CD4-positive, alpha-beta memory T cell (primary cell): ENCODE measurements at regions of chr13 and their contacts with region 1.

Region 1: GRCh38 chr13:49443704-49444523 is at the starts of genes CAB39L and SETDB2:
- DNase-seq: peak; percentile 99 to 100 (median 100)
- H3K4me3 ChIP-seq: peak within 1 kb of the TSS; percentile 72 to 88
- H3K4me3 Mint-ChIP-seq: peak within 1 kb of the TSS; percentile 92 to 98 (median 96)
- H3K27ac ChIP-seq: peak within 1 kb of the TSS; percentile 79
- H3K27ac Mint-ChIP-seq: peak within 1 kb of the TSS; percentile 93 to 99 (median 99)
- H3K4me1 ChIP-seq: peaks cover 50% of the 10 kb centered on the region
- H3K4me1 Mint-ChIP-seq: peaks cover 28 to 58% (median 41%) of the 10 kb centered on the region in 4 donors
- H3K27me3 ChIP-seq: no peaks in the 10 kb centered on the region
- H3K27me3 Mint-ChIP-seq: no peaks in the 10 kb centered on the region
- total RNA-seq, gene CAB39L: 5.7 to 7.7 TPM
- total RNA-seq, gene SETDB2: 27.6 to 28.2 TPM

Region 2: DNA sequence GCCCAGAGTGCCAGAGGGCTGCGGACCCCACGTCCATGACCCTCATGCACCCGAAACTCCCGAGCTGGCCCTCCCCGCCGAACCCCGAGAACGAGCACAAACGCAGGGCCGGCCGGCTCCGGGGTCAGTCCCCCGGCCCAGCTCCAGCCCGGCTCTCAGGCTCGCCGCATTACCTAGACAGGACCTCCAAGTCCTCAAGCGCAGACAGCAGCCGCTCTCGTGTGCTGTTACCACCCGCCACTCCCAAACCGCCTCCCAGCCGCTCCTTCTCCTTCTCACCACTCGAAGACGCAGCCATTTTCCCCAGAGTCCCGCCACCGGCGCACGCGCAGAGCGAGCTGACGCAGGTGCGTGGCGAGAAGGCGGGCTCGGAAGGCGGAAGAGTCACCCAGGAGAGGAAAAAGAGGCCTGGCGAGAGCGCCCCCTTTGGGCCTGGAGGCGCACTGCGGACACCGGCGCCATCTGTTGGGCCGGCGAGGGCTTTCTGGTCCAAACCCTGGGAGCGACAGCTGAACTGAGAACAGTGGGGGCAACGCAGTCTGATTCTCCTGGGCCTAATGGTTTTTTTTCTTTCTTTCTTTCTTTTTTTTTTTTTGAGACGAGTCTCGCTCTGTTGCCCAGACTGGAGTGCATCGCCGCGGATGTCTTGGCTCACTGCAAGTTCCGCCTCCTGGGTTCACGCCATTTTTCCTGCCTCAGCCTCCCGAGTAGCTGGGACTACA is 1349.0 kb before region 1 on chr13 and contains the start of gene MED4:
- CTCF ChIA-PET with region 1: no interaction called
- POLR2A ChIA-PET with region 1: no interaction called
- intact Hi-C with region 1: loop called (anchors 5 kb)
- DNase-seq: peak; percentile 95 to 98 (median 97)
- H3K4me3 ChIP-seq: peak within 1 kb of the TSS; percentile 73 to 76
- H3K4me3 Mint-ChIP-seq: peak within 1 kb of the TSS; percentile 93 to 98 (median 96)
- H3K27ac ChIP-seq: peak within 1 kb of the TSS; percentile 96
- H3K27ac Mint-ChIP-seq: peak within 1 kb of the TSS; percentile 92 to 99 (median 98)
- H3K4me1 ChIP-seq: peaks cover 37% of the 10 kb centered on the region
- H3K4me1 Mint-ChIP-seq: peaks cover 24 to 54% (median 35%) of the 10 kb centered on the region in 4 donors
- H3K27me3 ChIP-seq: no peaks in the 10 kb centered on the region
- H3K27me3 Mint-ChIP-seq: peaks cover 0 to 2% of the 10 kb centered on the region in 2 donors
- total RNA-seq, gene MED4: 50.6 to 53.5 TPM

Region 3: GRCh38 chr13:48709213-48709612 is 734.7 kb before region 1 on chr13:
- CTCF ChIA-PET with region 1: no interaction called
- POLR2A ChIA-PET with region 1: no interaction called
- intact Hi-C with region 1: no loop called
- DNase-seq: no peak
- H3K4me3 ChIP-seq: no peak overlapping the region
- H3K4me3 Mint-ChIP-seq: no peak overlapping the region
- H3K27ac ChIP-seq: no peak overlapping the region
- H3K27ac Mint-ChIP-seq: no peak overlapping the region
- H3K4me1 ChIP-seq: peaks cover 9% of the 10 kb centered on the region
- H3K4me1 Mint-ChIP-seq: peaks cover 8 to 11% (median 10%) of the 10 kb centered on the region in 4 donors
- H3K27me3 ChIP-seq: no peaks in the 10 kb centered on the region
- H3K27me3 Mint-ChIP-seq: no peaks in the 10 kb centered on the region

Region 4: DNA sequence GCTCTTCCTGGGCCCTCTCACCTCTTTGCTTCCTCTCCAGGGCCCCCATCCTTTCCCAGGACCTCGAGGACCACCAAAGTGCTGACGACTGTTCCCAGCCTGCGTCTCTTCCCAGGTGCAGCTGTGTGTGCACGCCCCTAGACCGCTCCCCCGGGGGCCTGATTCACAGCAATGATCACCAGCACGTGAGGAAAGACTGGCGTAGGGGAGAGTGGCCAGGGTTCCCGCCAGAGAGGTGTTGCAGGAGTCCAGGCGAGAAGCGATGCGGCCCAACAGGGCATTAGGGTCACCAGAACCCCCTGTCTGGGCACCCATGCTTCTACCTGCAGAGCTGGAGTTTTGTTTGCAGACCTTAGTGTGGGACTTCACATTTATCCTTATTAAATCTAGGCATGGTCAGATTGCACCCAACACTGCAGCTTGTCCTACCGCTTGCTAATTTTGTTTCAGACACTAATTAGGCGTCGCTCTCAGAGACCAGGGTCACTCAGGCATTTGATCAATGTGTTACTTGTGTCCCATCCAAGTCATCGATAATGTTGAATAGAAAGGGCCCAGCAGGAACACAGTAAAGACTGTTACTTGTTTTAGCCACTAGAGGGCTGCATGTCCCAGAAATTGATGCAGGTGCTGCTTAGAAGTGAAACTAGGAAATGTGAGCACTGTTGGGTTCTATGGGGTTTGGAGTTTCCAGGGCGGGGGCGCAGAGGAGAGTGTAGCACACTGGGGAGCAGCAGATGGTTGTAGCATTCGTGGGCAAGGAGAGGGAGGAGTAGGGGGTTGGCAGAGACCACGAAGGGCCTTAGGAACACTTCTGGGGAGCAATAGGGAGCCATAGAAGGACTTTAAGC is 142.9 kb before region 1 on chr13:
- CTCF ChIA-PET with region 1: interaction called, 5 read pairs
- POLR2A ChIA-PET with region 1: interaction called, 3 read pairs
- intact Hi-C with region 1: loop called (anchors 2 kb)
- DNase-seq: peak; percentile 77 to 79 (median 77)
- H3K4me3 ChIP-seq: peak overlapping the region; percentile 15 to 45
- H3K4me3 Mint-ChIP-seq: peak overlapping the region; percentile 70 to 85 (median 80)
- H3K27ac ChIP-seq: no peak overlapping the region
- H3K27ac Mint-ChIP-seq: peak overlapping the region in 6 of 7 donors; percentile 14 to 91 (median 74)
- H3K4me1 ChIP-seq: peaks cover 5% of the 10 kb centered on the region
- H3K4me1 Mint-ChIP-seq: peaks cover 6 to 14% (median 11%) of the 10 kb centered on the region in 4 donors
- H3K27me3 ChIP-seq: no peaks in the 10 kb centered on the region
- H3K27me3 Mint-ChIP-seq: no peaks in the 10 kb centered on the region

Region 5: DNA sequence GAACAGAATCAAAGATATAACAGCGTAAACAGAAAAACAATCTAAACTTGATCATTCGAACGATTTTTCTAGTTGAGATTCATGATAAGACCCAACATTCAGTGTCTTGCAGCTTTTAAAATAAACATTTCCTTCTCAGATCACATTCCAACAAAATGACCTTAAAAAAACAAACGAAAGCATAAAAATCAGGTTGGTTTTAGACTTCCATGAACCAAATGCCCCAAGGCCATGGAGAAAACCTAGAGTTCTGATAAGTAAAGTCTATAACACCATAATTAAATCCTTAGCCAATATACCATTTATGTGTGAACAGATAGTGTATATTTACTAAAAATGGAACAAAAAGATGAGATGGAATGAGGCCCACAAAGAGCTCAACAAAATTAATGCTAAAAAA is 55.7 kb before region 1 on chr13:
- CTCF ChIA-PET with region 1: no interaction called
- POLR2A ChIA-PET with region 1: no interaction called
- intact Hi-C with region 1: no loop called
- DNase-seq: no peak
- H3K4me3 ChIP-seq: no peak overlapping the region
- H3K4me3 Mint-ChIP-seq: no peak overlapping the region
- H3K27ac ChIP-seq: no peak overlapping the region
- H3K27ac Mint-ChIP-seq: no peak overlapping the region
- H3K4me1 ChIP-seq: no peaks in the 10 kb centered on the region
- H3K4me1 Mint-ChIP-seq: no peaks in the 10 kb centered on the region
- H3K27me3 ChIP-seq: no peaks in the 10 kb centered on the region
- H3K27me3 Mint-ChIP-seq: peaks cover 1 to 3% of the 10 kb centered on the region in 2 donors

Region 6: DNA sequence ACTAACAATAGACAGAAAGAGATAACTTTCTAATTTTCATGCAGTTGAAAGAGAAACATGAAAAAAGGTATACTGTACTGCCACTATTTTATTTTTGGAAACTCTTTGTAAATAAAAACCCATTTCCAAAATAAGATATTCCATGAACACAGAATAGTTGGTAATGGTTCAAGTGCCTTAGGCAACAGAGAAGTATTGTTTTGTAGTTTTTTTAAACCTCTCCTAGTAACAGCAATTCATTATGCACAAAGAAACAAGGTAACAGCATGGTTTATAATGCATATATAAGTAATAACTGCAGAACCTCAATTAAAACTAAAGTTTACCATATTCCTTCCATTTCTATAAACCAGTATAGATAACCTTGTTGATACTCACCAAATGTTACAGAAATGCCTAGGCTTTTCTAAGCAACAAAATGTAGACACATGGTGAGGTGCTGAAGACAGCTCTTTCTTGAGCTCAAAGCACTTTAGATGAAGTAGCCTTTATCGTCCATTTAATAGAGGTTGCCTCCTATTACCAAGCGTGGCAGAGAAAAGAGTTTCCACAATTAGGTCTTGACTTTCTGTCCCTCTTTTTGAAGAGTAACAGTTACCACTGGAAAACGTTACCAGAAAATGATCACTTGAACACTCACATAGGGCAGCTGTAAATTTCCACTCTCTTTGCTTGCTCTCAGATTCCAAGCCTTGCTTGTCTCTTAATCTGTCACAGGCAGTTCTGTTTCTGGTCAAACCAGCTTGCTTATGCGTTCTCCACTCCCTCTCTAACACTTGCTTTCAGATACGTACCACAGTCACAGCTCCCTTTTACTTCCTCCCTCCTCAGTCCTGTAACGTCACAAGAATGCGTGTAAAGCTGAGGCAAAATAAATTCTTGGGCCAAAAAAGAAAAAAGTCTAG is 42.9 kb before region 1 on chr13:
- CTCF ChIA-PET with region 1: no interaction called
- POLR2A ChIA-PET with region 1: no interaction called
- intact Hi-C with region 1: no loop called
- DNase-seq: no peak
- H3K4me3 ChIP-seq: no peak overlapping the region
- H3K4me3 Mint-ChIP-seq: no peak overlapping the region
- H3K27ac ChIP-seq: no peak overlapping the region
- H3K27ac Mint-ChIP-seq: no peak overlapping the region
- H3K4me1 ChIP-seq: no peaks in the 10 kb centered on the region
- H3K4me1 Mint-ChIP-seq: no peaks in the 10 kb centered on the region
- H3K27me3 ChIP-seq: no peaks in the 10 kb centered on the region
- H3K27me3 Mint-ChIP-seq: no peaks in the 10 kb centered on the region

Region 7: DNA sequence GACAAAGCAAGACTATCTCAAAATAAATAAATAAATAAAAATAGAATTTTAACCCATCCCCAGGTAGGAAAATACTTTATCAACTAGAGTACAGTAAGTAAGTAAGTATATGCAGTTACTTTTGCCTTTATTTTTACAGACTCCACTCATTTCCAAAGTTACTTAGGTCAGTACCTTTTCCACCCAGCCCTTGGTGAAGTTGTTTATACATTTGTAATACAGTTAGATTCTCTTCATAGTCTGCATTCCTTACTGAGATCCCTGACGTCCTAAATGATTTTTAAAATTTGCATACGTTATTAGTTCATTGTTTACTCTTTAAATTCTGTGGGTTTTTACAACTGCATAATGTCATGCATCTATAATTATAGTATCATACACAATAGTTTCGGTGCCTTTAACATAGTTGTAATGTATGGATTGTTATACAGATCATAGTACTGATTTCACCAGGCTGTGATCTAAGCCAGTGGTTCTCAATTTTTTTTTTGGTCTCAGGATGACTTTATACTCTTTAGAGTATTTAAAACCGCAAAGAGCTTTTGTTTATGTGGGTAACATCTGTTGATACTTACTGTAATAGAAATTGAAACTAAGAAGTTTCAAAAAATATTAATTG is 10.6 kb after region 1 on chr13:
- CTCF ChIA-PET with region 1: interaction called, 6 read pairs
- POLR2A ChIA-PET with region 1: interaction called, 41 read pairs
- intact Hi-C with region 1: loop called (anchors 1 kb)
- DNase-seq: peak; percentile 28 to 55 (median 35)
- H3K4me3 ChIP-seq: peak overlapping the region in 1 of 2 donors; percentile 1
- H3K4me3 Mint-ChIP-seq: peak overlapping the region in 7 of 8 donors; percentile 54 to 78 (median 73)
- H3K27ac ChIP-seq: no peak overlapping the region
- H3K27ac Mint-ChIP-seq: peak overlapping the region; percentile 4 to 92 (median 57)
- H3K4me1 ChIP-seq: peaks cover 41% of the 10 kb centered on the region
- H3K4me1 Mint-ChIP-seq: peaks cover 33 to 59% (median 40%) of the 10 kb centered on the region in 4 donors
- H3K27me3 ChIP-seq: no peaks in the 10 kb centered on the region
- H3K27me3 Mint-ChIP-seq: no peaks in the 10 kb centered on the region

Region 8: GRCh38 chr13:49585220-49586157 is 141.6 kb after region 1 on chr13 and contains the start of gene RCBTB1:
- CTCF ChIA-PET with region 1: no interaction called
- POLR2A ChIA-PET with region 1: interaction called, 37 read pairs
- intact Hi-C with region 1: loop called (anchors 1 kb)
- DNase-seq: peak; percentile 66 to 77 (median 72)
- H3K4me3 ChIP-seq: peak within 1 kb of the TSS; percentile 64 to 76
- H3K4me3 Mint-ChIP-seq: peak within 1 kb of the TSS; percentile 88 to 99 (median 96)
- H3K27ac ChIP-seq: peak within 1 kb of the TSS; percentile 82
- H3K27ac Mint-ChIP-seq: peak within 1 kb of the TSS; percentile 80 to 96 (median 92)
- H3K4me1 ChIP-seq: peaks cover 21% of the 10 kb centered on the region
- H3K4me1 Mint-ChIP-seq: peaks cover 15 to 52% (median 41%) of the 10 kb centered on the region in 4 donors
- H3K27me3 ChIP-seq: no peaks in the 10 kb centered on the region
- H3K27me3 Mint-ChIP-seq: no peaks in the 10 kb centered on the region
- total RNA-seq, gene RCBTB1: 20.7 to 21.3 TPM